ENCODE measurements at regions of chr16 and their contacts with region 1.

Region 1: DNA sequence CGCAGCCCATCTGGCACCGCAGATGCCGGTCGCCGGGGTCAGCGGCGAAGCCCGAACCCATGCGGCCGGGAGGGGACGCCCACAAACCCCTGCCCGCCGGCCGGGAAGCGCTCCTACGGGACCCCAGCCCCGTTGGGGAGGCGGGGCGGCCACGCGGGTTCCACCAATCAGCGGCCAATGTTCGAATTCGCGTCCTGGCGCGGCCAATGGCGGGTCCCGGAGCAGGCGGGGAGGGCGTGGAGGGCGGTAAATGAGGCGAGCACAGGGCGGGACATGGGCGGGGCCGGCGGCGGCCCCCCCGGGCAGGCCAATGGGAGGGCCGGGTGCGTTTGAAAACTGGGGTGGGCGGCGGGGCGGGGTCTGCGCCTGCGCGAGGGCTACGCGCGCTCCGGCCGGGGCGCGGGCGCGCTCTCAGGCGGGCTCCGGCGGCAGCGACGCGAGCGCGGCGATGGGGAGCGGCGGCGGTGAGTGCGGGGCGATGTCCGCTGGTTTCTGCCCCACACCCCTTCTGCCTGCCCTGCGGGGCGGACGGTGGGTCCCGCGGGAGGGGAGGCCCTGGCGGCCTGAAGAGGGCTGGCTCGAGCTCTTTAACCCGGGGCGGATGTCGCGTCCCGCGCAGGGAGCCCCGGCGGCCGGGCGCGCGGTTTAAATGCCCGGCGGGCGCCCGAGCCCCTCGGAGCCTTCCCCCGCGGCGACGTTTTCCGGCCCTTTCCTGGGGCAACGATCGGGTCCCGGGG is at the start of gene CCNF:
- H3K4me3 ChIP-seq: peak within 1 kb of the TSS; percentile 92
- H3K27ac ChIP-seq: peak within 1 kb of the TSS; percentile 78; the same call in 1 of the 2 replicates
- H3K4me1 ChIP-seq: no peaks in the 10 kb centered on the region; the same call in 1 of the 2 replicates
- CTCF ChIP-seq: peak; percentile 18; the same call in 1 of the 2 replicates

Region 2: DNA sequence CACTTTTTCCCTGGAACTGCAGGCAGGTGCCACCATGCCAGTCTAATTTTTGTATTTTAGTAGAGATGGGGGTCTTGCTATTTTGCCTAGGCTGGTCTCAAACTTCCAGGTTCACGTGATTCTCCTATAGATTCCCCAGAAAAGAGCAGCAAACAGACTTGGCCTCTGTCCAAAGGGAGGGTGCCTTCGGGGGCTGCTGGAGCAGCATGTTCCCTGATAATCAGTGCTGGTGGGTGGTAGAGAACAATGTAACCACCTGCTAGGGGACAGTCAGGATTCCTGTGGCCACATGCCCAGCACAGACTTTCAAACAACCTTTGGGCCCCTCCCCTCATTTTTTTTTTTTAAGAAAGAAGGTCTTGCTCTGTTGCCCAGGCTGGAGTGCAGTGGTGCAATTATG is 14.1 kb before region 1 on chr16:
- CTCF ChIA-PET with region 1: interaction called, 20 read pairs
- POLR2A ChIA-PET with region 1: interaction called, 11 read pairs
- H3K4me3 ChIP-seq: no peak overlapping the region
- H3K27ac ChIP-seq: no peak overlapping the region
- H3K4me1 ChIP-seq: no peaks in the 10 kb centered on the region
- CTCF ChIP-seq: no peak

Region 3: GRCh38 chr16:2439598-2439997 is 10.4 kb after region 1 on chr16:
- CTCF ChIA-PET with region 1: interaction called, 3 read pairs
- POLR2A ChIA-PET with region 1: interaction called, 11 read pairs
- H3K4me3 ChIP-seq: no peak overlapping the region
- H3K27ac ChIP-seq: no peak overlapping the region
- H3K4me1 ChIP-seq: no peaks in the 10 kb centered on the region
- CTCF ChIP-seq: no peak

Region 4: DNA sequence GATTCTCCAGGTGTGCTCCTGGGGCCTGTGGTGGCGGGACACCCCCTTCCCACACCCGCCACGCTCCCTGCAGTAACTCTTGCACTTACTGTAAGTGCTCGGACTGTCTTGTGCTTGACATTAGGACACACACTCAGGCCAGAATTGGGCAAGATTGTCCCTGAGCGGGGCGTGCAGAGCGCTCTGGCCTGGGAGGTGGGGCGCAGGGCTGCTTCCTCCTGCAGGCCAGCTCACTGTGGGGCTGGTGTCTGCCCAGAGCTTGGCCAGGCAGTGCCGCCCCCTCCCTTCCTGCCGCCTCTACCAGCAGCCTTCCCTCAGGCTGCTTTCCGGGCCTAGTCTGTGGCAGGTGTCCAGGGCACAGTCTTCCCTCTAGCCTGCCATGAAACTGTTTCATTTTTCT is 78.5 kb after region 1 on chr16:
- CTCF ChIA-PET with region 1: no interaction called
- POLR2A ChIA-PET with region 1: no interaction called
- H3K4me3 ChIP-seq: no peak overlapping the region
- H3K27ac ChIP-seq: no peak overlapping the region
- H3K4me1 ChIP-seq: peaks cover 2% of the 10 kb centered on the region; the same call in 1 of the 2 replicates
- CTCF ChIP-seq: no peak